Ascending aorta (tissue), 2 donors: ENCODE measurements at regions of chr4 and their contacts with region 1.

Region 1: DNA sequence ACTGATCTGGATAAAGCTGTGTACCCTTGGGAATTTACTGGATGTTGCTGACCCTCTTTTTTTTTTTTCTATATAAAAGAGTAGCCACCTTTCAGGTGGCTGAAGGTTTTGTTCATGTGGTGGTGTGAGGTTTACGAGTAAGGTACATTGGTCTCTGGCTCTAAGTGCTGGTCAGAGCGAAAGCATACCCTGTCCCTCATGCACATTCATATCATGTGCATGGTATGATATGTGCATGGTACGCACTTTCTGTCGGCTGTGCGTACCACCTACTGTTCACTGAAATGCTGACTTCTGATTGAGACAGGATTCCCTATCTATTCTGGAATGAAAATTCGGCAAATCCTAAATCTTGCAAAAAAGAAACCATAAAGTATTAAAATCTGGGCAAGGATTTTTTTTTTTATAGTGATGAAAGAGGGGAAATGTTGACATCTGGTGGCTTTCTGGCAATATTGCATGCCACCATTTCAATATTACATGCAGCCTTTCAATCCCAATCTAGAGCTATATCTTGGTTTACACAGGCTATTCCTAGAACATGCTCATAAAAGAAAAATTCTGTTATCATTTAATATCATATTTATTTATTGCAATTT is 32.8 kb downstream of the FAM149A start:
- DNase-seq: no peak
- H3K4me3 ChIP-seq: peak overlapping the region; percentile 7 to 48
- H3K27ac ChIP-seq: no peak overlapping the region
- H3K4me1 ChIP-seq: no peaks in the 10 kb centered on the region
- H3K27me3 ChIP-seq: no peaks in the 10 kb centered on the region
- CTCF ChIP-seq: peak; percentile 33 to 74 (median 60)

Region 2: GRCh38 chr4:185634066-185634652 is 503.1 kb before region 1 on chr4:
- intact Hi-C with region 1: loop called (anchors 10 kb)
- DNase-seq: no peak
- H3K4me3 ChIP-seq: no peak overlapping the region
- H3K27ac ChIP-seq: no peak overlapping the region
- H3K4me1 ChIP-seq: no peaks in the 10 kb centered on the region
- H3K27me3 ChIP-seq: no peaks in the 10 kb centered on the region
- CTCF ChIP-seq: peak; percentile 4 to 40 (median 33)